Activated B cell treated with CpG ODN at 0.5 μM for 24 hours (primary cell): ENCODE measurements at regions of chr9 and their contacts with region 1.

Region 1: GRCh38 chr9:128275996-128276573 is at the starts of genes GOLGA2 and SWI5:
- DNase-seq: peak; percentile 96
- ATAC-seq: peak; percentile 95
- H3K4me3 Mint-ChIP-seq: peak within 1 kb of the TSS; percentile 97
- H3K27ac Mint-ChIP-seq: peak within 1 kb of the TSS; percentile 92
- H3K4me1 Mint-ChIP-seq: peaks cover 27% of the 10 kb centered on the region
- H3K27me3 Mint-ChIP-seq: no peaks in the 10 kb centered on the region
- CTCF ChIP-seq: no peak
- total RNA-seq, gene GOLGA2: 46.0 and 53.5 TPM in 2 replicates
- total RNA-seq, gene SWI5: 7.2 and 10.4 TPM in 2 replicates

Region 2: DNA sequence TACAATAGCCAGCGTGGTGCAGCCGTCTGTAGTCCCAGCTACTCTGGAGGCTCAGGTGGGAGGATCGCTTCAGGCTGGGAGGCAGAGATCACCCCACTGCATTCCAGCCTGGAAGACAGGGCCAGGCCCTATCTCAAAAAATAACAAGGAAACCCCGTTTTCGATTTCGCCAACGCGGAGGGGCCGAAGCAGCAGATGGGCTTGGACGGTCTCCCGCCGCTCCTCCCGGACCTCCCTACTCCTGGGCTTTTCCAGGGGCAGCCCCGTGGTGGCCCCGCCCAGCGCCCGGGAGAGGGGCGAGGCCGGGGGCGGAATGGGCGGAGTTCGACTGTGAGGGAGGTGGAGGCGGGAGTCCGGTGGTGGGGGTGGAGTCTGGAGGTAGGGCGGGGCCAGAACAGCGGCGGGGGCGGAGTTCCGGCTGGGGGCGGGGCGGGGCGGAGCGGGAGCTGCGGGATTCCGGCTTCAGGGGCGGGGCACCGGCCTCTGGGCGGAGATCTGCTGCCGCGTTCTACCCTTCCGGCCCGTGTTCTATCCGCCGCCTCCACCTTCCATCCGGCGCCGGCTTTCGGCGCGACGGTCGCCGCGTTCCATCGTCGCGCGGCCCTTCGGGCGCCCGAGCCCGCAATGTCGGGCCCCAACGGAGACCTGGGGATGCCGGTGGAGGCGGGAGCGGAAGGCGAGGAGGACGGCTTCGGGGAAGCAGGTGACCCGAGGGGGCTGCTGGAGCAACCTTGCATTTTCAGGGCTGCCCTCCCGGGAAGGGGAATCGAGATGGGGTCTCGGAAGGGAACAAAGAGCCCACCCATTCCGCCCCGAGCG is 116.1 kb before region 1 on chr9 and contains the start of gene BBLN:
- CTCF ChIA-PET with region 1: no interaction called
- POLR2A ChIA-PET with region 1: interaction called, 6 read pairs
- intact Hi-C with region 1: loop called (anchors 1 kb)
- DNase-seq: peak; percentile 85
- ATAC-seq: peak; percentile 94
- H3K4me3 Mint-ChIP-seq: peak within 1 kb of the TSS; percentile 81
- H3K27ac Mint-ChIP-seq: peak within 1 kb of the TSS; percentile 81
- H3K4me1 Mint-ChIP-seq: peaks cover 13% of the 10 kb centered on the region
- H3K27me3 Mint-ChIP-seq: no peaks in the 10 kb centered on the region
- CTCF ChIP-seq: no peak
- total RNA-seq, gene BBLN: 47.7 and 53.6 TPM in 2 replicates

Region 3: GRCh38 chr9:128191406-128192046 is 84.6 kb before region 1 on chr9 and contains the start of gene CIZ1:
- CTCF ChIA-PET with region 1: no interaction called
- POLR2A ChIA-PET with region 1: no interaction called
- intact Hi-C with region 1: loop called (anchors 5 kb)
- DNase-seq: peak; percentile 85
- ATAC-seq: peak; percentile 89
- H3K4me3 Mint-ChIP-seq: peak within 1 kb of the TSS; percentile 94
- H3K27ac Mint-ChIP-seq: peak within 1 kb of the TSS; percentile 92
- H3K4me1 Mint-ChIP-seq: peaks cover 25% of the 10 kb centered on the region
- H3K27me3 Mint-ChIP-seq: no peaks in the 10 kb centered on the region
- CTCF ChIP-seq: no peak
- total RNA-seq, gene CIZ1: 142 and 160 TPM in 2 replicates

Region 4: DNA sequence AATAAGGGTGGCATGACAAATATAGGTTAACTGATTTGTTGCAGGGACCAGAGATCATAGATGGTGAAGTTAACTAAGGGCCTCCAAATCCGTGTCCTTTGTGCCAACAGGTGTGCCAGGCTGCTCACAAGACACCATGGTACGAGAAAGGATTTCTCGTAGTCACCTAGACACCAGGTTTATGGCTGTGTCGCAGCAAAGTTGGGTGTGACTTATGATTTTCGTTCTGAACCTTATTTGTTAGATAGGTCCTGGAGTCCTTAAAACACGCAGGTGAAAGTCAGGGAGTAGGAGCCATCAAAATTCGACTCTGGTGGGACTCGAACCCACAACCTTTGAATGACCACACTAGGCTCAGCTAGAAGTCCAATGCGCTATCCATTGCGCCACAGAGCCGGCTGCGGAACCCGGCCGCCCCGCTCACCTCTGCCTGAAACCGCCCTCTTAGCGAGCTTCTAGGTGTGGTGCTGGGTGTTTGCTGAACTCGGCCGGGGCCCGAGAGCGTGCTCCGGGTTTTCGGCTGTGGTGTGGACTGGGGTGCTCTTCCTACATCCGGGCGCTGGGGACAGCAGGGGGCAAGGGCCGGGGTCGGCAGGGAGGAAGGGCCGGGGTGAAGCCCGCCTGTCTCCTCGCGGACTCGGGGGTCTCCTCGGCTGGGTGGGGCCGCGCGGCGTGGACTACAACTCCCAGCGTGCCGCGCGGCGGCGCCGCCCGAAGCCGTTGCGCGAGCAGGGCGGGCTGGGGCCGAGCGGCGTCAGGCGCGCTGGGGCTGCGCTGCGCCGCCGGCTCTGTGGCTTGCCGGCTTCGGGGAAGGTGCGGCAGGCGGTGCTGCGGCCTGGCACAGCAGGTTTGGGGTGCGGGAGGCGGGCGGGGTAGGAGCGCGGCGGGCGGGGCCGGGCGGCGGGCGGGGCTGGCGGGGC is 63.9 kb after region 1 on chr9 and contains the start of gene SLC27A4:
- CTCF ChIA-PET with region 1: no interaction called
- POLR2A ChIA-PET with region 1: interaction called, 7 read pairs
- intact Hi-C with region 1: loop called (anchors 1 kb)
- DNase-seq: peak; percentile 81
- ATAC-seq: peak; percentile 91
- H3K4me3 Mint-ChIP-seq: peak within 1 kb of the TSS; percentile 86
- H3K27ac Mint-ChIP-seq: peak within 1 kb of the TSS; percentile 80
- H3K4me1 Mint-ChIP-seq: peaks cover 10% of the 10 kb centered on the region
- H3K27me3 Mint-ChIP-seq: no peaks in the 10 kb centered on the region
- CTCF ChIP-seq: no peak
- total RNA-seq, gene SLC27A4: 13.6 and 14.4 TPM in 2 replicates

Region 5: DNA sequence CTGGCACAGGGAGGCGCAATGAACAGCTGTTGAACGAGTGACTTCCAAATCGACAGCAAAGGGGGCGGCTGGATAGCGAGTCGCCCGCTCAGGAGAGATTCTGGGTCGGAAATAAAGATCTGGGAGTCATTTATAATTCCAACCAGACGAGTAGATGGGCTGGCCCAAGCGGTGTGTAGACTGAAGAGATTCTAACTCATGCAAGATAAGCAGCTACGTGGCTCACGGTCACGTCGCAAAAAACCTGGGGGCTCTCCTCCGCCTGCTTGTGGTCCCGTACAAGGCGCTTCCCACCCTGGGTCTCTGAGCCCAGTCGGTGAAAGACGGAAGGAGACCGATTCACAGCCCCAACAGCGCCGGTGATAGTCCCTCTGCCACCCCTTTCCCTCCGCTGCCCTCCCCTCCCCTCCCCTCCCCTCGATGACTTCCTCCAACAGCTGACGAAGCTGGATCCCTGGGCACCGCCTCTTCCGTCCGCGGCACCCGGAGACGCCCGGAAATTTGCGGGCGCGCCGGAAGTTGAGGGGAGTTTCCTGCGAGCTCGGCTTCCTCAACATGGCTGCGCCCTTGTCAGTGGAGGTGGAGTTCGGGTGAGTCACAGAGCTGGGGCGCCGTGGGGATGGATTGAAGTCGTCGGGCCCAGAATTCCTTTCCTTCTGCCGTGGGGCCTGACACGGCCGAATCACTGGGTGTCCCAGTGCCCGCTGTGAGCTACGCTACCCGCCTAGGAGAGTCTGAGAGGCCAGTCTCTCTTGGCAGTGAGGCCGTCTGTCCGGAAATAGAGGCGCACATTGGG is 94.9 kb after region 1 on chr9 and contains the start of gene URM1:
- CTCF ChIA-PET with region 1: no interaction called
- POLR2A ChIA-PET with region 1: interaction called, 11 read pairs
- intact Hi-C with region 1: no loop called
- DNase-seq: peak; percentile 96
- ATAC-seq: peak; percentile 91
- H3K4me3 Mint-ChIP-seq: peak within 1 kb of the TSS; percentile 97
- H3K27ac Mint-ChIP-seq: peak within 1 kb of the TSS; percentile 94
- H3K4me1 Mint-ChIP-seq: peaks cover 31% of the 10 kb centered on the region
- H3K27me3 Mint-ChIP-seq: no peaks in the 10 kb centered on the region
- CTCF ChIP-seq: no peak
- total RNA-seq, gene URM1: 55.8 and 65.1 TPM in 2 replicates

Region 6: GRCh38 chr9:128455849-128456612 is 179.9 kb after region 1 on chr9 and contains the start of gene ODF2:
- CTCF ChIA-PET with region 1: no interaction called
- POLR2A ChIA-PET with region 1: interaction called, 3 read pairs
- intact Hi-C with region 1: loop called (anchors 5 kb)
- DNase-seq: peak; percentile 99
- ATAC-seq: peak; percentile 88
- H3K4me3 Mint-ChIP-seq: peak within 1 kb of the TSS; percentile 88
- H3K27ac Mint-ChIP-seq: peak within 1 kb of the TSS; percentile 83
- H3K4me1 Mint-ChIP-seq: peaks cover 14% of the 10 kb centered on the region
- H3K27me3 Mint-ChIP-seq: no peaks in the 10 kb centered on the region
- CTCF ChIP-seq: no peak
- total RNA-seq, gene ODF2: 41.2 and 45.7 TPM in 2 replicates